ENCODE measurements at regions of chr4 and their contacts with region 1.

Region 1: GRCh38 chr4:153318696-153319320 is 25.7 kb upstream of the MND1 start:
- DNase-seq: peak; percentile 38
- H3K4me3 ChIP-seq: no peak overlapping the region
- H3K27ac ChIP-seq: no peak overlapping the region
- H3K4me1 ChIP-seq: no peaks in the 10 kb centered on the region
- H3K27me3 ChIP-seq: no peaks in the 10 kb centered on the region
- CTCF ChIP-seq: peak; percentile 73 to 82

Region 2: GRCh38 chr4:152843481-152844090 is 475.2 kb before region 1 on chr4:
- CTCF ChIA-PET with region 1: no interaction called
- dilution Hi-C with region 1: no loop called
- in situ Hi-C with region 1: loop called in 1 of 2 experiments (anchors 25 kb)
- intact Hi-C with region 1: loop called (anchors 5 kb)
- DNase-seq: no peak
- H3K4me3 ChIP-seq: no peak overlapping the region
- H3K27ac ChIP-seq: no peak overlapping the region
- H3K4me1 ChIP-seq: no peaks in the 10 kb centered on the region
- H3K27me3 ChIP-seq: no peaks in the 10 kb centered on the region
- CTCF ChIP-seq: no peak

Region 3: GRCh38 chr4:153045111-153045982 is 273.5 kb before region 1 on chr4:
- CTCF ChIA-PET with region 1: no interaction called
- dilution Hi-C with region 1: no loop called
- in situ Hi-C with region 1: no loop called
- intact Hi-C with region 1: no loop called
- DNase-seq: peak; percentile 65
- H3K4me3 ChIP-seq: no peak overlapping the region
- H3K27ac ChIP-seq: no peak overlapping the region
- H3K4me1 ChIP-seq: peaks cover 13% of the 10 kb centered on the region
- H3K27me3 ChIP-seq: no peaks in the 10 kb centered on the region
- CTCF ChIP-seq: no peak

Region 4: GRCh38 chr4:153083447-153083947 is 235.3 kb before region 1 on chr4:
- CTCF ChIA-PET with region 1: no interaction called
- dilution Hi-C with region 1: no loop called
- in situ Hi-C with region 1: no loop called
- intact Hi-C with region 1: loop called (anchors 1 kb)
- DNase-seq: peak; percentile 75
- H3K4me3 ChIP-seq: no peak overlapping the region
- H3K27ac ChIP-seq: no peak overlapping the region
- H3K4me1 ChIP-seq: peaks cover 21% of the 10 kb centered on the region
- H3K27me3 ChIP-seq: no peaks in the 10 kb centered on the region
- CTCF ChIP-seq: peak; percentile 58 to 65

Region 5: DNA sequence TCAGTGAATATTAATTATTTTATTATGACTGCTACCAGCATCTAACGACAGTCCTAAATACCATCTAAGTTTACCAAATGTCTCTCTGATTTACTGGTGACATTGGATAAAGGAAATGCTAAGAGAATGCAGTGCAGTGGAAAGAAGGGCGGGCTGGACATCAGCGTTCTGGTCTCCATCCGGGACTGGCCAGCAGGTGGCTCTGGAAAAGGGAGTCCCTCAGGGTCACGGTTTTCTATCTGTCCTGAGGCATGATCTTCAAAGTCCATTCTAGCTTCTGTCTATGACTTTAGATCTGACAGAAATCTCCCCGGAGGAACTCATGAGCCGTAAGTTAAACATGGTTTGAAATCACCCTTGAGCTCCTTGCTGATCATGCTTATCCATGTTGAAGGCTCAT is 111.2 kb before region 1 on chr4:
- CTCF ChIA-PET with region 1: no interaction called
- dilution Hi-C with region 1: no loop called
- in situ Hi-C with region 1: no loop called
- intact Hi-C with region 1: loop called (anchors 1 kb)
- DNase-seq: no peak
- H3K4me3 ChIP-seq: no peak overlapping the region
- H3K27ac ChIP-seq: no peak overlapping the region
- H3K4me1 ChIP-seq: peaks cover 13% of the 10 kb centered on the region
- H3K27me3 ChIP-seq: no peaks in the 10 kb centered on the region
- CTCF ChIP-seq: peak; percentile 31 to 53